Activated CD4-positive, alpha-beta T cell treated with anti-CD3 and anti-CD28 coated beads, Interleukin-2, amount 10 ng/mL, durations not matched to agents 24 days and 14 days (primary cell): ENCODE measurements at regions of chr11 and their contacts with region 1.

Region 1: GRCh38 chr11:44861849-44862749 is 88.6 kb downstream of the TP53I11 start:
- DNase-seq: peak; percentile 92
- H3K4me3 Mint-ChIP-seq: peak overlapping the region; percentile 72
- H3K27ac Mint-ChIP-seq: peak overlapping the region; percentile 94
- H3K4me1 Mint-ChIP-seq: peaks cover 23% of the 10 kb centered on the region
- H3K27me3 Mint-ChIP-seq: peaks cover 66% of the 10 kb centered on the region

Region 2: DNA sequence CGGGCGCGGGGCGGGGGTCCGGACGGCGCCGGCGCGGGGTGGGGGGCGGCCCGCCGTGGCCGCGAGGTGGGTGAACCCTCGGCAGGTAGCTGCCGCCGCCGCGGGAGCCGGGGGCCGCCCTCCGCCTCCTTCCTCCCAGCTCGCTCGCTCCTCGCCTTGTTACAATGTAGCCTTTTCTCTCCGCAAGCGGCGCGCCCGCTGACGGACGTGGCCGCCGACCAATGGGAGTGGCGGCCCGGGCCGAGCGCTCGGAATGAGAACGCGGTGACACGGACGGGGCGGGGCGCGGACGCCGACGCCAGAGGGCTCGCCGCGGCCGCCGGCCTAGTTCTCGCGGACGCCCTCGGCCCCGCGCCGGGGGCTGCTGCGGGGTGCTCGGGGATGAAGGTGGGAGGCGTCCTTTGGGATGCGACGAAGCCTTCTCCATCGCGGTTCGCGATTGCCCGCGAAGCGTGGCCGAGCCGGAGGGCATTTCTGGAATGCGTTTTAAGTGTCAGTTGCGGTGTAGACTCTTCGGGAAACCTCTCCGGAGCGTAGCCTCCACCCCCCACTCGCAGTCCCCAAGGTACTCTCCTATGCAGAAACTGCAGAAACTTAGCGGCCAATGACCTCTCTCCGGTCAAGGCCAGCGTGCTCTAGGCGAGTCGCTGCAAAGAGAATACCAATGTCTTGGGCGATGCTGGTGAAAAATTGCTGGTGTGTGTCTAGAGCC is 285.1 kb after region 1 on chr11:
- intact Hi-C with region 1: loop called (anchors 5 kb)
- DNase-seq: peak; percentile 98
- H3K4me3 Mint-ChIP-seq: peak overlapping the region; percentile 82
- H3K27ac Mint-ChIP-seq: peak overlapping the region; percentile 83
- H3K4me1 Mint-ChIP-seq: peaks cover 12% of the 10 kb centered on the region
- H3K27me3 Mint-ChIP-seq: peaks cover 44% of the 10 kb centered on the region